ENCODE measurements at regions of chr15 and their contacts with region 1.

Region 1: GRCh38 chr15:80989518-80990478 is at the start of gene MESD:
- DNase-seq: peak; percentile 100
- H3K4me3 ChIP-seq: peak within 1 kb of the TSS; percentile 83 to 86 (median 84)
- H3K27ac ChIP-seq: peak within 1 kb of the TSS; percentile 87 to 89 (median 89)
- H3K4me1 ChIP-seq: peaks cover 50 to 59% (median 56%) of the 10 kb centered on the region in 4 donors
- H3K27me3 ChIP-seq: no peaks in the 10 kb centered on the region
- CTCF ChIP-seq: no peak
- EP300 ChIP-seq: no peak
- POLR2A ChIP-seq: peak; percentile 85
- total RNA-seq, gene MESD: 14.1 to 17.4 (median 14.5) TPM

Region 2: DNA sequence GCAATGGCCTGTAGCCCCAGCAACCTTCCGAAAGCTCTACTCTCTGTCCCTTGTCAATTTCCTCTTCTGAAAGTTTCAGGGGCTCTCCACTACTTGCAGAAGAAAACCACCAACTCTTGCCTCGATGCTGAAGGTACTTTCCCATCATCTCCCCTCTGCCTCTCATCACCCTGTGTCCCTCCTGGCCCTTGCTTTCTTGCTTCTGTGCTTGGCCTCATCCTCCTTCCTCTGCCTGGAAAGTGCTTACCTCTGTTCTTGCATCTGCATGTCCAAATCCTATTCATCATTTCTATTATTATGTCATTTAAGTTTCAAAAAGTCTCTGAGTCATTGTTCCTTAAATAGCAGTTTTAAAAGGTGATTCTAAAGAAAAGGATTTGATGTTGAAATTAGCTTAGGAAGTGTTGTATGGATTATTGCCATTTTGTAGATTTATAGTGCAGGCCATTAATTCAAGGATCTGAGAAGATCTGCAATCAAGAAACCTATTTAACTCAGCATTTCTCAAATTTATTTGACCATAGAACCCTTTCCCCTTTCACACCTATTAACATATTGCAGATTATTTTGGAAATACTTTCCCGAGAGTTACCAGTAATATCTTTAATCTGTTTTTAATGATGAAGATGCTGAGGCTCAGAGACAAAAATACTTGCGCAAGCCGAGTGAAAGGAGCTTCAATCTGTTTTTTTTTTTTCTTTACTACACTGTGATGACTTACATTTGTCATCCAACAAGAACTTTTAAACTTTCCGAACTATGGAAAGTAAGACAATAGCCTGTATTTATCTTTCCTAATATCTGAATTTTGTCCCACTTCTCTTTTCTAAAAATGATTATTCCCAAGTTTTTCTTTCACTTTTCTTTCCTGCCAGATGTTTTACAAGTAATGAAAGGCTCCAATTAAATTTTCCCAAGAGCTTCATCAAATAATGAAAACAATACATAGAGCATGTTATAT is 122.0 kb after region 1 on chr15:
- intact Hi-C with region 1: no loop called
- DNase-seq: no peak
- H3K4me3 ChIP-seq: no peak overlapping the region
- H3K27ac ChIP-seq: no peak overlapping the region
- H3K4me1 ChIP-seq: peaks cover 0 to 7% (median under 1%) of the 10 kb centered on the region in 4 donors
- H3K27me3 ChIP-seq: peaks cover 0 to 8% (median 0%) of the 10 kb centered on the region in 4 donors
- CTCF ChIP-seq: no peak
- EP300 ChIP-seq: no peak
- POLR2A ChIP-seq: no peak

Region 3: GRCh38 chr15:81323944-81324881 is 334.4 kb after region 1 on chr15 and contains the start of gene STARD5:
- intact Hi-C with region 1: loop called (anchors 10 kb)
- DNase-seq: peak; percentile 99
- H3K4me3 ChIP-seq: peak within 1 kb of the TSS; percentile 70 to 87 (median 76)
- H3K27ac ChIP-seq: peak within 1 kb of the TSS; percentile 72 to 81 (median 77)
- H3K4me1 ChIP-seq: peaks cover 14 to 22% (median 21%) of the 10 kb centered on the region in 4 donors
- H3K27me3 ChIP-seq: no peaks in the 10 kb centered on the region
- CTCF ChIP-seq: no peak
- EP300 ChIP-seq: no peak
- POLR2A ChIP-seq: peak; percentile 22
- total RNA-seq, gene STARD5: 2.7 to 3.7 (median 3.0) TPM

Measured in esophagus muscularis mucosa (tissue), 4 donors.